Activated B cell treated with CpG ODN at 0.5 μM for 24 hours (primary cell): ENCODE measurements at regions of chr9 and their contacts with region 1.

Region 1: DNA sequence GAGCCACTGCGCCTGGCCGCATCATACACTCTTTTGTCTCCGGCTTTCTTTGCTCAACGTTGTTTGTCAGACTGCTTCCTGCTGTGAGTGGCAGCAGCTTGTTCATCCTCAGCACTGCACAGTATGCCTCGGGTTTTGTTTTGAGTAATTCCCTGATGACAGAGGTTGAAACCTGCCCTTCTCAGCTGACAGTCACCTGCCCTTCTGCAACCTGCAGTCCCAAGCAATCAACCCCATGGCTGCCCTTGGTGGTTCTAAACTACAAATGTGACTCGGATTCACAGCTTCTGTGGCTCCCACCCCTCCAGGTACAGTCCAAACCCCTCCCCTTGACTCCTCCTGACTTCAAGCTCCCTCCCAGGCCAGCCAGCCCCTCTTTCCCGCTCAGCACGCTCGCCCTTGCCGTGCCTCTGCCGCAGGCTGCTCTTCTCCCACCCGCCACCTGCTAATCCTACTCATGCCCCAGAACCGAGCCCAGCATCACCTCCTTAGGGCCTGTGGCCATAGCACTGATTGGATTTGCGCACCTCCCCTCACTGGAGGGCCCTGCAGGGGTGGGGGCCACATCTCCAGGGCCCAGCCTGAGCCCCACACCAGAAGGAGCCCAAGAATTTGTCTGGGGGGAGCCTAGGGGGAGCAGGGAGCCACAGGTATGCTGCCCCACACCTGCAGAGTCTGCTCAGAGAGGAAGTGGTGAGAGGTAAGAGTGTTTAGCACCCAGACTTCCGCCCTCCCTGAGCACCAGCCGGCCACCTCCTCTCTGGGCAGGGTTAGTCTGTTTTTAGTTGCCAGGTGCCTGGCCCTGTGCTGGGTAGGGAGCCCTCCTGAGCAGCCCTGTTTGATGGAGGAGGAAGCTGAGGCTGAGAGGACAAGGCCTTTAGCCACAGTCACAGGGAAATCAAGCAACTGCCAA is 10.1 kb downstream of the EEIG1 start:
- DNase-seq: peak; percentile 50
- ATAC-seq: peak; percentile 74
- H3K4me3 Mint-ChIP-seq: peak overlapping the region; percentile 79
- H3K27ac Mint-ChIP-seq: peak overlapping the region; percentile 97
- H3K4me1 Mint-ChIP-seq: peaks cover 100% of the 10 kb centered on the region
- H3K27me3 Mint-ChIP-seq: no peaks in the 10 kb centered on the region
- CTCF ChIP-seq: no peak

Region 2: GRCh38 chr9:127960410-127961154 is 10.1 kb before region 1 on chr9:
- CTCF ChIA-PET with region 1: interaction called, 10 read pairs
- POLR2A ChIA-PET with region 1: interaction called, 16 read pairs
- intact Hi-C with region 1: loop called (anchors 1 kb)
- DNase-seq: no peak
- ATAC-seq: no peak
- H3K4me3 Mint-ChIP-seq: no peak overlapping the region
- H3K27ac Mint-ChIP-seq: peak overlapping the region; percentile 75
- H3K4me1 Mint-ChIP-seq: peaks cover 80% of the 10 kb centered on the region
- H3K27me3 Mint-ChIP-seq: no peaks in the 10 kb centered on the region
- CTCF ChIP-seq: no peak